ENCODE measurements at regions of chr16 and their contacts with region 1.

Region 1: DNA sequence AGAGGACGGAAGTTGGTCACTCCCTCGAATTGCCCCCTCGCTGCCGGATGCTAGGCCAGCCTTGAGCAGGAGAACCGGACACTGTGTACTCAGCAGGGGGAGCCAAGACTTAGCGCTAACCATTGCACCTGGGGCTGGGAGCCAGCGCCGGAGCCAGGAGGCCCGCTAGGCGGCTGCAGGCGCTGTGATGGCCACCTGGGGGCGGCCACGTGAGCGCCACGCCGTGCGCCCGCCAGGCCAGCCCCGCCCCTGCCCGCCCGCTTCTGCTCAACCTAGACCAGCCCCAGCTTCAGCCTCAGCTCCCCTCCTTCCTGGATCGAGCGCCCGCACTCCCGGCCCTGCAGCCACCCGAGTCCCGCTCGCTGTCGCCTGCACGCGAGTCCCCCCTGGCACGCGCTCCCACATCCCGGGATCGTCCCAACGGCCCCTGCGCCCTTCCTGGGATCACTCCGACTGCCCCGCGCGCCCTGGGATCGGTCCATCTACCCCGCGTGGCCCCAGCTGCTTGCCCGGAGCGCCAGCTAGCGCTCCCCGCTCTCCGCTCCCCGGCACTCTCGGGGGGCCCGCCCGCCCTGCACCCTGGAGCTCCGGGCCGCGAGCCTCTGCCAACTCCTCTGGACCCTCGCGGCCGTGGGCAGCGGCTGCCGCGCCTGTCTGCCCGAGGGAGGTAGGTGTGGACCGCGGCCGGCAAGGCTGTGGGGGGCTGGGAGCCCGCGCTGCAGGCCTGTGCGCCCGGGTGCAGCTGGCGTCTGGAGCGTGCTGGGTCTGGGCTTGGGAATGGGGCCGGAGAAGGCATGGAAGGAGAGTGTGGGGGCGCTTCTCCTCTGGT is at the start of gene EEF2K:
- DNase-seq: peak; percentile 75
- ATAC-seq: peak; percentile 80
- H3K4me3 Mint-ChIP-seq: peak within 1 kb of the TSS; percentile 89
- H3K27ac Mint-ChIP-seq: peak within 1 kb of the TSS; percentile 77
- H3K4me1 Mint-ChIP-seq: peaks cover 38% of the 10 kb centered on the region
- H3K27me3 Mint-ChIP-seq: no peaks in the 10 kb centered on the region
- CTCF ChIP-seq: peak; percentile 39
- total RNA-seq, gene EEF2K: 26.5 and 29.7 TPM in 2 replicates

Region 2: GRCh38 chr16:22217889-22218730 is 11.9 kb after region 1 on chr16:
- CTCF ChIA-PET with region 1: interaction called, 3 read pairs
- POLR2A ChIA-PET with region 1: interaction called, 14 read pairs
- intact Hi-C with region 1: loop called (anchors 2 kb)
- DNase-seq: peak; percentile 29
- ATAC-seq: peak; percentile 86
- H3K4me3 Mint-ChIP-seq: peak overlapping the region; percentile 52
- H3K27ac Mint-ChIP-seq: peak overlapping the region; percentile 85
- H3K4me1 Mint-ChIP-seq: peaks cover 26% of the 10 kb centered on the region
- H3K27me3 Mint-ChIP-seq: no peaks in the 10 kb centered on the region
- CTCF ChIP-seq: no peak

Region 3: GRCh38 chr16:22240023-22240710 is 33.9 kb after region 1 on chr16:
- CTCF ChIA-PET with region 1: interaction called, 8 read pairs
- POLR2A ChIA-PET with region 1: no interaction called
- intact Hi-C with region 1: loop called (anchors 1 kb)
- DNase-seq: no peak
- ATAC-seq: no peak
- H3K4me3 Mint-ChIP-seq: no peak overlapping the region
- H3K27ac Mint-ChIP-seq: no peak overlapping the region
- H3K4me1 Mint-ChIP-seq: peaks cover 20% of the 10 kb centered on the region
- H3K27me3 Mint-ChIP-seq: no peaks in the 10 kb centered on the region
- CTCF ChIP-seq: no peak

Region 4: GRCh38 chr16:22374311-22375116 is 168.3 kb after region 1 on chr16 and contains the start of gene CDR2:
- CTCF ChIA-PET with region 1: no interaction called
- POLR2A ChIA-PET with region 1: no interaction called
- intact Hi-C with region 1: loop called (anchors 5 kb)
- DNase-seq: peak; percentile 90
- ATAC-seq: peak; percentile 95
- H3K4me3 Mint-ChIP-seq: peak within 1 kb of the TSS; percentile 94
- H3K27ac Mint-ChIP-seq: peak within 1 kb of the TSS; percentile 70
- H3K4me1 Mint-ChIP-seq: peaks cover 22% of the 10 kb centered on the region
- H3K27me3 Mint-ChIP-seq: no peaks in the 10 kb centered on the region
- CTCF ChIP-seq: no peak
- total RNA-seq, gene CDR2: 6.2 and 6.7 TPM in 2 replicates